ENCODE measurements at regions of chr3 and their contacts with region 1.

Region 1: GRCh38 chr3:160941885-160942494 is 163.2 kb downstream of the B3GALNT1 start:
- DNase-seq: peak; percentile 91
- H3K4me3 Mint-ChIP-seq: no peak overlapping the region
- H3K27ac Mint-ChIP-seq: no peak overlapping the region
- H3K4me1 Mint-ChIP-seq: peaks cover 2% of the 10 kb centered on the region
- H3K27me3 Mint-ChIP-seq: peaks cover 9% of the 10 kb centered on the region

Region 2: GRCh38 chr3:160633361-160634083 is 308.5 kb before region 1 on chr3:
- intact Hi-C with region 1: no loop called
- DNase-seq: no peak
- H3K4me3 Mint-ChIP-seq: no peak overlapping the region
- H3K27ac Mint-ChIP-seq: no peak overlapping the region
- H3K4me1 Mint-ChIP-seq: no peaks in the 10 kb centered on the region
- H3K27me3 Mint-ChIP-seq: peaks cover 5% of the 10 kb centered on the region

Region 3: GRCh38 chr3:160643994-160644393 is 298.0 kb before region 1 on chr3:
- intact Hi-C with region 1: no loop called
- DNase-seq: no peak
- H3K4me3 Mint-ChIP-seq: no peak overlapping the region
- H3K27ac Mint-ChIP-seq: no peak overlapping the region
- H3K4me1 Mint-ChIP-seq: no peaks in the 10 kb centered on the region
- H3K27me3 Mint-ChIP-seq: peaks cover 6% of the 10 kb centered on the region

Region 4: DNA sequence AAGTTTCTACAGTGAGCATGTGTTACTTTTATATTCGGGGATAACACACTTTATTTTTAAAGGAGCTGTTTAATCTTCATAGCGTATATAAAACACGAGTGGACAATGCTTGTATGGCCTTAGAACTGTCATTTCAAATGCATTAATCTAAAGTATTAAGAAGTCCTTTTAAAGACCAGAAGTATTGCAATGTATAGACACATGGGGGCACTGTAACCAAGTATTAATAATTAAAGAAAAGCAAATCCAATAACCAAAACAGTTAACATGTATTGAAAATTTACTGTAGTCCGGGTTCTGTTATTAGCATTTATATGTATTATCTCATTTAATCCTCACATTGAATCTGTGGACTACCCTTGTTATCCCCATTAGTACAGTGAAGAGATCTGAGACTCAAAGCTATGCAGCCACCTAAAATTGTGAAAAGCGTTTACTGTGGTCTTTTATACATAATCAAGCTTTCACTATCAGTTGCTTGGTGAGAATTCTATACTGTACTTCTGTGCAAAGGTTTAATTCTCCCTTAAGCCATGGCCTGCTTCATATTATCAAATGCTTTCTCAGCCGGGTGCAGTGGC is 254.9 kb before region 1 on chr3:
- intact Hi-C with region 1: loop called (anchors 1 kb)
- DNase-seq: no peak
- H3K4me3 Mint-ChIP-seq: no peak overlapping the region
- H3K27ac Mint-ChIP-seq: no peak overlapping the region
- H3K4me1 Mint-ChIP-seq: no peaks in the 10 kb centered on the region
- H3K27me3 Mint-ChIP-seq: peaks cover 2% of the 10 kb centered on the region

Region 5: GRCh38 chr3:161014843-161015749 is 73.1 kb after region 1 on chr3:
- intact Hi-C with region 1: no loop called
- DNase-seq: no peak
- H3K4me3 Mint-ChIP-seq: no peak overlapping the region
- H3K27ac Mint-ChIP-seq: no peak overlapping the region
- H3K4me1 Mint-ChIP-seq: no peaks in the 10 kb centered on the region
- H3K27me3 Mint-ChIP-seq: peaks cover 7% of the 10 kb centered on the region